WTC11 (cell line): ENCODE measurements at regions of chr6 and their contacts with region 1.

Region 1: DNA sequence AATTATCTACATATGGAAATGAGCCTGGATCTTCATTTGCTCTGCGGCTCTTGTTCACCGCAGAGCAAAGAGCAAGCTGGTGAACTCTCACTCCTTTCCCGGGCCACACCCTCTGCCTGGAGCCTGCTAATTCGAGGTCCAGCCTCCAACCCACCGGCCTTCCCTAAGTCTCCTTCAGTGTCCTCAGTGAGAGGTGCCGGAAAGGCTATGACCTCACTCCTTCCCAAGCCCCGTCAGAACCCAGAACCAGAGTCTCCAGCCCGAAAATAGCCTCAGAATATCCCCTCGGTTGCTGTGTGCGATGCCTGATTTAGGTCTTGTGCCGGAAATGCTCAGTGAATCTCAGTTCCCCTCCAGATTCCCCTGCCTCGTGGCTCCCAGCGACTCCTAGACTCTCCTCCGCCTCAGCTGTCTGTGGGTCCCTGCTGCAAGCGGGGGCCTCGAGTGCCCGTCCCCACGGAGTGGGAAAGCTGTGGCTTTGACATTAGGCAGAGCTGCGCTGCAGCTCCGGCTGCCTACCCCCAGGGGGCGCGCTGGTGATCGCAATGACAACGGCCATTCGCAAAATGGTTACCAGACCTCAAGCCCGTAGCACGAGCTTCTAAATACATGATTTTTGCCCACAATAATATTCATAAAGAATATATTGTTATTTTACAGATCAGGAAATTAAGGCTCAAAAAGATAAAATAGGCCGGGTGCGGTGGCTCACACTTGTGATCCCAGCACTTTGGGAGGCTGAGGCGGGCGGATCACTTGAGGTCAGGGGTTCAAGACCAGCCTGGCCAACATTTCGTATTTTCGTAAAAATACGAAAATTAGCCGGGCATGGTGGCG is 4.1 kb upstream of the BNIP5 start:
- DNase-seq: peak; percentile 83
- ATAC-seq: peak; percentile 84
- H3K4me3 Mint-ChIP-seq: peak overlapping the region; percentile 70
- H3K27ac Mint-ChIP-seq: no peak overlapping the region; the same call in 1 of the 2 replicates
- H3K4me1 Mint-ChIP-seq: peaks cover 9% of the 10 kb centered on the region
- H3K27me3 Mint-ChIP-seq: peaks cover 15% of the 10 kb centered on the region
- CTCF ChIP-seq: peak; percentile 93

Region 2: DNA sequence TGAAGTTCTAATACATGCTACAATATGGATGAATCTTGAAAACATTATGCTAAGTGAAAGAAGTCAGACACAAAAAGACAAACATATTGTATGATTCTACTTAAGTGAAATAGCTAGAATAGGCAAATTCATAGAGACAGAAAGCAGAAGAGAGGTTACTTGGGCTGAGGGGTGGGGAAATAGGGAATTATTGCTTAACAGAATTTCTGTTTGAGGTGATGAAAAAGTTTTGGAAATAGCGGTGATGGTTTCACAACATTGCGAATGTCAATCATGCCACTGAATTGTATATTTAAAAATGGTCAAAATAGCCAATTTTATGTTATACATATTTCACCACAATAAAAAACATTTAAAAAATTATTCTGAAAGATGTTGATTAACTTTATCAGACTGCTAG is 322.5 kb before region 1 on chr6:
- CTCF ChIA-PET with region 1: no interaction called
- POLR2A ChIA-PET with region 1: no interaction called
- DNase-seq: no peak
- ATAC-seq: no peak
- H3K4me3 Mint-ChIP-seq: no peak overlapping the region
- H3K27ac Mint-ChIP-seq: no peak overlapping the region
- H3K4me1 Mint-ChIP-seq: peaks cover 9% of the 10 kb centered on the region
- H3K27me3 Mint-ChIP-seq: no peaks in the 10 kb centered on the region
- CTCF ChIP-seq: no peak

Region 3: DNA sequence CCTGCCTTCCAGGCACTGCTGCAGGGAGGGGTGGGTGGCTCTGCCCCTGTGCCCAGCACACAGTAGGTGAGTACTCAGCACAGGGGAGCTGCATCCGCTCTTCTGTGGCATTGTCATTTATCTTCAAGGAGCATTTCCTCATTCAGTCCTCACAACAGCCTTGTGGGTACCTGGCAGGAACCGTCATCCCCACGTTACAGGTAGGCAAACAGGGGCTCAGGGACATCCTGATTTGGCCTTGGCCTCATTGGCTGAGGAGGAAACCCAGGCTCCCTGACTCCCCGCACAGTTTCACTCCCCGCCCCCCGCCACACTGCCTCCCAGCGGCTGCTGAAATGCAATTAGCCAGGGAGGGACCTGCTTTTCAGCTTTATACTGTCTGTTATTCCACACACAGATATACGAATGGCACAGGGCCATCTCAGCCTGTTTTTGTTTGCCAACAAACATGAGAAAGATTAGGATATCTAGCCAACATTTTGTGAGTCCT is 95.2 kb before region 1 on chr6:
- CTCF ChIA-PET with region 1: interaction called, 15 read pairs
- POLR2A ChIA-PET with region 1: no interaction called
- DNase-seq: peak; percentile 62
- ATAC-seq: peak; percentile 78
- H3K4me3 Mint-ChIP-seq: no peak overlapping the region
- H3K27ac Mint-ChIP-seq: peak overlapping the region; percentile 85
- H3K4me1 Mint-ChIP-seq: peaks cover 54% of the 10 kb centered on the region
- H3K27me3 Mint-ChIP-seq: no peaks in the 10 kb centered on the region; the same call in 1 of the 2 replicates
- CTCF ChIP-seq: no peak

Region 4: GRCh38 chr6:36314221-36315014 is 26.4 kb before region 1 on chr6:
- CTCF ChIA-PET with region 1: interaction called, 20 read pairs
- POLR2A ChIA-PET with region 1: no interaction called
- DNase-seq: no peak
- ATAC-seq: peak; percentile 58
- H3K4me3 Mint-ChIP-seq: no peak overlapping the region
- H3K27ac Mint-ChIP-seq: peak overlapping the region; percentile 71; the same call in 1 of the 2 replicates
- H3K4me1 Mint-ChIP-seq: peaks cover 5% of the 10 kb centered on the region
- H3K27me3 Mint-ChIP-seq: no peaks in the 10 kb centered on the region
- CTCF ChIP-seq: no peak

Region 5: GRCh38 chr6:36350681-36351571 is 10.1 kb after region 1 on chr6:
- CTCF ChIA-PET with region 1: interaction called, 26 read pairs
- POLR2A ChIA-PET with region 1: no interaction called
- DNase-seq: no peak
- ATAC-seq: no peak
- H3K4me3 Mint-ChIP-seq: no peak overlapping the region
- H3K27ac Mint-ChIP-seq: no peak overlapping the region
- H3K4me1 Mint-ChIP-seq: peaks cover 11% of the 10 kb centered on the region
- H3K27me3 Mint-ChIP-seq: peaks cover 3% of the 10 kb centered on the region; the same call in 1 of the 2 replicates
- CTCF ChIP-seq: no peak

Region 6: DNA sequence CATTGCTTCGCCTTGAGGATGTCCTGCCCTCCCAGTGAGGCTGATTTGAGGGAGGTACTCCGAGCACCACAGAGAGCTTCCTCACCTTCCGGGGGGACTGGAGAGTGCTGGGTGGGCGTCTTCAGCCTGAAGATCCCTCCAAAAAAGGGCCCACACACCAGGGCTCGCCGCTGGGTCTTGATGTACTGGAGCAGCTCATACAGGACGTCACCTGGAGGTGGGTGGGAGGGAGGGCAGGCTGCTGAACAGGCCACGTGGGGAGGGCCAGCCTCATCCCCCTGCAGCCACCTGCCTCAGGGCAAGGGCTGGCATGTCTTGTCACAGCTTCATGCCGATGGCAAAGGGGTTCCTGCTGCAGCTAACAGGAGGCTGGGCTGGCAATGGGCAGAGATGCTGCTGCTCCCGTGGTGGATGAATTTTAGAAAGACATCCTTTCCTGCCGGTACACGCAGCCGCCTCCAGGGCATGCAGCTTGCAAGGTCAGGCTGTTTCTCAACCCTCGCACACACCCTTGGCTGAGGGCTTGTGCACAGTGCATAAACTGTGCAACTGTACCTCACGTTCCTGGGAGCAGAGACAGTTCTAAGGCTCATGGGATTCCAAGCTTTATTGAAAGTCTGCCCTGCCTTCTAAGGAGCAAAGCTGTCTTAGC is 32.7 kb after region 1 on chr6:
- CTCF ChIA-PET with region 1: interaction called, 11 read pairs
- POLR2A ChIA-PET with region 1: no interaction called
- DNase-seq: no peak
- ATAC-seq: peak; percentile 13
- H3K4me3 Mint-ChIP-seq: no peak overlapping the region
- H3K27ac Mint-ChIP-seq: no peak overlapping the region
- H3K4me1 Mint-ChIP-seq: peaks cover 27% of the 10 kb centered on the region
- H3K27me3 Mint-ChIP-seq: no peaks in the 10 kb centered on the region
- CTCF ChIP-seq: no peak